MCF 10A (cell line): ENCODE measurements at regions of chr1 and their contacts with region 1.

Region 1: DNA sequence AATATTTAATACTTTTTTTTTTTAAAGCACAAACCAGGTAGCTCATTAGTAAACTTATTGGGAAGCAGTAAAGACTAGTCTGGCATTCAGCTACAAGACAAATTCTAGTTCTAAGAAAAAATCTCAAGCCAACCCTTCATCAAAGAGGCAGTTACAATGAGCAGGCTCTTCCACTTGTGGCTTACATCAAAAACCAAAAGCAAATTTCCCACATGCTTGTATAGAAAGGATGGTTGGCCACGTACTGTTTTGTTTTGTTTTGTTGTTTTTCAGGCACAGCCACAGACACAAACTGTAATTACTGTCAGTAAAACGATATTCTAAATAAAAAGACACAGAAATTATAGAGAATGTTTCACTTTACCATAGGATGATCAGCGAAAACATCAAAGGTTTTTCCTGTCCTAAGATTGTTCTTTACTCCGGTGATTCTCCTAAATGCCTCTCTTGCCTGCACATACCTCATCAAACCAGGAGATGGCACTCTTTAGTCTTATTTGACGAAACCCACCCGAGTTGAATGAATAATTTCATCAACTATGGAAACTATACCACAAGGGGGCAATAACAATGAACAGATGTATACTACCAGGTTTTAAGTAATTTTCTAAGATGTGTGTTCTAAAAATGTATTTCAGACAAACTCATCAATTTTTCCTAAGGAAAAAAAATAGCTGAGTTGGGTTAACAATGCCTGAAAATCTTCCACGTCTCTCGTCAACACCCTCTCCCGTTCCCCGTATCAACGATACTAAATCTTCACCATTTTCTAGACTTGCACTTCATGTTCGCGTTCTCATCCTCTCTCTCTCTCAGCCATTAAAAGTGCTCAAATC is 26.9 kb downstream of the RPL5 start:
- DNase-seq: peak; percentile 82
- H3K4me3 Mint-ChIP-seq: no peak overlapping the region
- H3K27ac Mint-ChIP-seq: no peak overlapping the region
- H3K4me1 Mint-ChIP-seq: peaks cover 7% of the 10 kb centered on the region
- H3K27me3 Mint-ChIP-seq: no peaks in the 10 kb centered on the region
- CTCF ChIP-seq: peak; percentile 88

Region 2: GRCh38 chr1:92817986-92818764 is 40.6 kb before region 1 on chr1:
- CTCF ChIA-PET with region 1: no interaction called
- POLR2A ChIA-PET with region 1: no interaction called
- intact Hi-C with region 1: no loop called
- DNase-seq: peak; percentile 39
- H3K4me3 Mint-ChIP-seq: no peak overlapping the region
- H3K27ac Mint-ChIP-seq: no peak overlapping the region
- H3K4me1 Mint-ChIP-seq: peaks cover 4% of the 10 kb centered on the region
- H3K27me3 Mint-ChIP-seq: no peaks in the 10 kb centered on the region
- CTCF ChIP-seq: peak; percentile 71

Region 3: DNA sequence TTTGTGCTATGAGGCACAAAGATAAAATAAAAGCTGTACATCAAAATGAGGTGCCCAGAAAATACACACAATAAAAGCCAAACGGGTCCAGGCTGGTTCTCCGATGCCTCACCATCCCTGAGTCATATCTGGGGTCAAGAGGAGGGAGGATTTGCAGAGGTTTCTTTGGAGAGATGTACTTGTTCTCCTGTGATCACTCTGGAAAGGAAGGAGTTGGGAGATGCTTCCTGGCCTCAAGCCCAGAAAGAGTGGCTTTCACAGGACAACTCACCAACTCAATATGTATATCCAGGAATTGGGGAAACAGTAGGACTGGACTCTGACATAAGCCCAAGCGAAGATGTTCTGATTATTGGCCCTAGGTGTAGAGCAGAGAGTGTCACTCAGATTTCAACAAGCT is 50.5 kb after region 1 on chr1:
- CTCF ChIA-PET with region 1: interaction called, 23 read pairs
- POLR2A ChIA-PET with region 1: interaction called, 3 read pairs
- intact Hi-C with region 1: no loop called
- DNase-seq: peak; percentile 94
- H3K4me3 Mint-ChIP-seq: no peak overlapping the region
- H3K27ac Mint-ChIP-seq: peak overlapping the region; percentile 56
- H3K4me1 Mint-ChIP-seq: peaks cover 26% of the 10 kb centered on the region
- H3K27me3 Mint-ChIP-seq: no peaks in the 10 kb centered on the region
- CTCF ChIP-seq: no peak

Region 4: DNA sequence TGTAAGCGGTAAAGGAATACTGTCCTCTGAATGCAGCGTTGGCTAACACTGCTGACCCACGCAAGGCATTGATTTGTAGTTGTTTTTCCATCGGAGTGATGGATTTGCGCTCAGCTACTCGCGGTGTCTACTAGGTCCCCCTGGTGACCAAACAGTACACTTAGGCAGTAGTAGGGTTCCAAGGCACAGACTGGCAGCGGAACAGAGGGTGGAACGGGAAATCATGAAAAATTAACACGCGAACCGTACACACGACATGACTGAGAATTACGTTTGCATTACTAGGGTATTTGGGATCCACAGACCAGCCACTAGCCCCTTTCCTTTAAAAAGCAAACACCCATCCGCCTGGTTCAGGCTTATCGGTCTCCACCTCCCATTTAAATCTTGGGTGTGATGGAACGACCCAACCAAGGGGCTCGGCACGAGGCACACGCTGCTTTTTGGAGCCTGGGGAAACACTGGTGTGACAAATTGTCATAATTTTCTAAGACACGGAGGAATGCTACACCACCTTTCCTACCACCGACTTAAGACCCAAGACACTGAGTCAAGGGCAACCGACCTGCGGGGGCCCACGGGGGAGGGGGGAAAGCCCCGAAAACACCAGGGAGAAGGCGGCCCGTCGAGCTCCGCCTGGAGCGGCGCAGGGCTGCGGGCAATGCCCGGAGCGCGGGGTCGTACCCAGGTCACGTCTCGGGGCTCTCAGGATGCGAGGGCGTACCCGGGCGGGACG is 101.8 kb after region 1 on chr1:
- CTCF ChIA-PET with region 1: interaction called, 175 read pairs
- POLR2A ChIA-PET with region 1: interaction called, 13 read pairs
- intact Hi-C with region 1: loop called (anchors 1 kb)
- DNase-seq: peak; percentile 82
- H3K4me3 Mint-ChIP-seq: peak overlapping the region; percentile 85
- H3K27ac Mint-ChIP-seq: peak overlapping the region; percentile 78
- H3K4me1 Mint-ChIP-seq: peaks cover 4% of the 10 kb centered on the region
- H3K27me3 Mint-ChIP-seq: no peaks in the 10 kb centered on the region
- CTCF ChIP-seq: peak; percentile 35

Region 5: DNA sequence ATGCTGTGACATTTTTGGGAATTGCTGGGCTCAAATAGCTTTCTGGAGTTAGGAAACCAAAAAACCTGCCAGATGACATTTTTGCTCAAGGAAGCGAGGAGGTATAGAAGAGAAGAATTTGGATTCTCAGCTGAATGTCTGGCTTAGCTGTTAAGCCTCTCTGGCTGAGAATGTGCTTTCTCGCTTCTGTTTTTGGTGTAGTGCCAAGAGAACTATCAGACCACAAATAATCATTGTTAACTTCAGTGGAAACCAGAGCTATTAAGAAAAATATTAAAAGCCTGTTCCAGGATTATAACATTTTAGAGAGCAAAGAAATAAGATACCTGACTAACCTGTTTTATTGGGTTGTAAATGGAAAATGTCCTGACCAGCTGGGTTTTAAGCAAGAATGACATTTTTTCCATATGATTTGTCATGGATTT is 142.0 kb after region 1 on chr1:
- CTCF ChIA-PET with region 1: interaction called, 24 read pairs
- POLR2A ChIA-PET with region 1: interaction called, 3 read pairs
- intact Hi-C with region 1: no loop called
- DNase-seq: no peak
- H3K4me3 Mint-ChIP-seq: no peak overlapping the region
- H3K27ac Mint-ChIP-seq: no peak overlapping the region
- H3K4me1 Mint-ChIP-seq: no peaks in the 10 kb centered on the region
- H3K27me3 Mint-ChIP-seq: peaks cover 42% of the 10 kb centered on the region
- CTCF ChIP-seq: no peak